Natural killer cell (primary cell): ENCODE measurements at regions of chr6 and their contacts with region 1.

Region 1: DNA sequence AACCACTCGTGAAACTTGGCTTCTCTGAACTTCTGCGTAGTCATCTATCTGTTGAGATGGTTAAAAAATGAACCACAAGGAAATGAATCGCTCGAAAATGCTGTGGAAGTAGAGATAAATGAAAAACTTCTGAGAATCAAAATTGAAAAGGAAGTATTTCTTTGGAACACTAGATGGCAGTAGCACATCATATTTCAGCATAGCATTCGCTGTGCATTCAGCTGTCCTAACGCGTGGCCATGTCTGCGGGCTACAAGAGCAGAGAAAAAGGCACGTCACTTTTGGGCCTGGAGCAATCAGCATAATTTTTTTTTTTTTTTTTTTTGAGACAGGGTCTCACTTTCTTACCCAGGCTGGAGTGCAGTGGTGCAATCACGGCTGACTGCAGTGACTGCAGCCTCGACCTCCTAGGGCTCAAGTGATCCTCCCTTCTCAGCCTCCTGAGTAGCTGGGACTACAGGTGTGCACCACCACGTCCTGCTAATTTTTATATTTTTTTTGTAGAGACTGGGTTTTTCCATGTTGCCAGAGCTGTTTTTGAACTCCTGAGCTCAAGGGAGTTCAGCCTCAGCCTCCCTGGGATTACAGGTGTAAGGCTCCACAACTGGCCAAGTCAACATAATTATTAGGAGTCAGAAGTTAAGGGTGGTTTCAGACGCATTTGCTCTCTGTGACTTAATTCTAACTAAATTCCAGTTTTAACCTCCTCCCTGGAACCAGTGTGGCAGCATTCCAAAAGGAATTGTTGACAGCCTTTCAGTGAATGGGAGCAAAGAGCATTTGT is 8.8 kb upstream of the PERP start:
- DNase-seq: peak in 1 of 2 donors; percentile 84
- ATAC-seq: peak; percentile 85 to 95 (median 94)
- H3K4me3 ChIP-seq: no peak overlapping the region
- H3K4me3 Mint-ChIP-seq: no peak overlapping the region
- H3K27ac ChIP-seq: no peak overlapping the region
- H3K27ac Mint-ChIP-seq: no peak overlapping the region
- H3K4me1 ChIP-seq: no peaks in the 10 kb centered on the region
- H3K4me1 Mint-ChIP-seq: peaks cover 4 to 5% of the 10 kb centered on the region in 2 donors
- H3K27me3 ChIP-seq: no peaks in the 10 kb centered on the region
- H3K27me3 Mint-ChIP-seq: peaks cover 27 to 28% of the 10 kb centered on the region in 2 donors
- CTCF ChIP-seq: peak; percentile 84

Region 2: GRCh38 chr6:138012682-138013081 is 103.4 kb before region 1 on chr6:
- intact Hi-C with region 1: no loop called
- DNase-seq: peak in 1 of 2 donors; percentile 25
- ATAC-seq: no peak
- H3K4me3 ChIP-seq: no peak overlapping the region
- H3K4me3 Mint-ChIP-seq: no peak overlapping the region
- H3K27ac ChIP-seq: no peak overlapping the region
- H3K27ac Mint-ChIP-seq: no peak overlapping the region
- H3K4me1 ChIP-seq: no peaks in the 10 kb centered on the region
- H3K4me1 Mint-ChIP-seq: no peaks in the 10 kb centered on the region
- H3K27me3 ChIP-seq: no peaks in the 10 kb centered on the region
- H3K27me3 Mint-ChIP-seq: peaks cover 7 to 8% of the 10 kb centered on the region in 2 donors
- CTCF ChIP-seq: no peak

Region 3: DNA sequence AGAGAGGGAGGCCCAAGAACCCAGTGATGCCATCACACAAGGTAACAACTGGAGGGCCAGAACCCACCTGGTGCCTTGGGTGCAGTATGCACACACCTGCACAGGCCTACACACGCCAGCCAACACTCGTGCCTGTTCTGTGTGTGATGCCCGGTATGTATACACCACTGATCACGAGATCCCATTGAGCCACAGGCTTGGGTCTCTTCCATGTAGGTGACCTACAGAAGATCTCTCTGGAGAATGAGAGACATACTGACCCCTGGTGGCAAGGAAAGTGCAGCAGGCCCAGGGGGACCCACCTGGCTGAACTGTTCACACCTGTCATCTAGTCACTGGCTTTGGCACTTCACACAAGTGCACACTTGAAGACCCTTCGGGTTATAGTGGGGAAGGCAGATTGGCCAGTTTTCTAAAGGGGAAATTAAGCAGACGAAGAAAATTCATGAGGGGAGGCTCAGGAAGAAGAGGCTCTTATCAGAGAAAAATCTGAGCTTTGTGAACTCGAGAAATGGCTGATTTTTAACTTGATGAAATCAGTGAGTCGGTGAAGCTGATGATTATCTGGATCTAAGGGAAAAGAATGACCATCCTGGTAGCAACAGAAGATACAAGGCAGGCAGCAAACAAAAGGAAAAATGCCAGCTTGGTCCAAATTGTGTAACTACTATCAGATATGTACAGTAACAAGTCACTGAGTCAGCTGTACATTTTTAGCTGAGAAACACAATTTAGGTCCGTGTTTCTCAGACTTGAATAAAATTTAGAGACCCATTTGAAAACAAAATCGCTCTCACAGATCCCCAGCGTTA is 171.3 kb after region 1 on chr6:
- intact Hi-C with region 1: loop called (anchors 1 kb)
- DNase-seq: peak in 1 of 2 donors; percentile 68
- ATAC-seq: peak in 1 of 3 donors; percentile 50
- H3K4me3 ChIP-seq: no peak overlapping the region
- H3K4me3 Mint-ChIP-seq: no peak overlapping the region
- H3K27ac ChIP-seq: no peak overlapping the region
- H3K27ac Mint-ChIP-seq: no peak overlapping the region
- H3K4me1 ChIP-seq: no peaks in the 10 kb centered on the region
- H3K4me1 Mint-ChIP-seq: no peaks in the 10 kb centered on the region
- H3K27me3 ChIP-seq: no peaks in the 10 kb centered on the region
- H3K27me3 Mint-ChIP-seq: peaks cover 0 to under 1% of the 10 kb centered on the region in 2 donors
- CTCF ChIP-seq: peak; percentile 62

Region 4: GRCh38 chr6:138517635-138518034 is 401.6 kb after region 1 on chr6:
- intact Hi-C with region 1: loop called (anchors 1 kb)
- DNase-seq: peak; percentile 31 to 77
- ATAC-seq: peak; percentile 68 to 74 (median 68)
- H3K4me3 ChIP-seq: no peak overlapping the region
- H3K4me3 Mint-ChIP-seq: no peak overlapping the region
- H3K27ac ChIP-seq: no peak overlapping the region
- H3K27ac Mint-ChIP-seq: no peak overlapping the region
- H3K4me1 ChIP-seq: peaks cover 10% of the 10 kb centered on the region
- H3K4me1 Mint-ChIP-seq: peaks cover 21 to 27% of the 10 kb centered on the region in 2 donors
- H3K27me3 ChIP-seq: no peaks in the 10 kb centered on the region
- H3K27me3 Mint-ChIP-seq: peaks cover 16 to 26% of the 10 kb centered on the region in 2 donors
- CTCF ChIP-seq: peak; percentile 89

Region 5: DNA sequence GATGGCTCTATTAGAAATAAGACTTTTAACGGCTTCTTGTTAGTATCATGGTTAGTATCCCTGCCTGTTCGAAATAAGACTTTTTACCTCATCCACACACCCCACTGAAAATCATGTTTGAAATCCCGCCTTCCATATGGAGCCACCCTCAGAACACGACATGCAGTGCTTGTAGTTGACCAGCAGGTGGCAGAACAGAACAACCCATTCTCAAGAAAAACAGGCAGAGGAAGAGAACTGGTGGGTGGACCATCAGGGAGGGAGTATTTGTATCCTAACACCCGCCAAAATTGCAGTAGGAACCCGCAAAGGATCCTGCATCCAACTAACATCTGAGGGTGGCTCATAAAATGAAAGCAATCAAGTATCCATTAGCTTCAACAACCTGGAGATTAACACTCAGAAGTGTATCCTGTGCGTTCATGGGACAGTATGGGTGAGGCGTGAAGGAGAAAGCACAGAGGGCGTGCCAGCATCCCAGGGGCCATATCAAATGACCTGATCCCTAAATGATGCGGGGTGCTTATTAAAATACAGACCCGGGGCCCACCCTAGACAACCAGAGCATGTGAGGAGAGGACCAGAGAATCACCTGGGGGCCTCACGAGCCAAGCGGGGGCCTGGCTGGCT is 472.9 kb after region 1 on chr6:
- intact Hi-C with region 1: loop called (anchors 1 kb)
- DNase-seq: peak; percentile 29 to 81
- ATAC-seq: peak; percentile 70 to 80 (median 78)
- H3K4me3 ChIP-seq: no peak overlapping the region
- H3K4me3 Mint-ChIP-seq: no peak overlapping the region
- H3K27ac ChIP-seq: no peak overlapping the region
- H3K27ac Mint-ChIP-seq: no peak overlapping the region
- H3K4me1 ChIP-seq: peaks cover 5% of the 10 kb centered on the region
- H3K4me1 Mint-ChIP-seq: peaks cover 14 to 24% of the 10 kb centered on the region in 2 donors
- H3K27me3 ChIP-seq: no peaks in the 10 kb centered on the region
- H3K27me3 Mint-ChIP-seq: peaks cover 0 to 6% of the 10 kb centered on the region in 2 donors
- CTCF ChIP-seq: peak; percentile 86

Region 6: GRCh38 chr6:138765896-138766655 is 650.0 kb after region 1 on chr6:
- intact Hi-C with region 1: loop called (anchors 1 kb)
- DNase-seq: peak in 1 of 2 donors; percentile 58
- ATAC-seq: peak in 1 of 3 donors; percentile 47
- H3K4me3 ChIP-seq: no peak overlapping the region
- H3K4me3 Mint-ChIP-seq: no peak overlapping the region
- H3K27ac ChIP-seq: no peak overlapping the region
- H3K27ac Mint-ChIP-seq: no peak overlapping the region
- H3K4me1 ChIP-seq: no peaks in the 10 kb centered on the region
- H3K4me1 Mint-ChIP-seq: no peaks in the 10 kb centered on the region
- H3K27me3 ChIP-seq: no peaks in the 10 kb centered on the region
- H3K27me3 Mint-ChIP-seq: no peaks in the 10 kb centered on the region
- CTCF ChIP-seq: peak; percentile 65